Aorta (tissue), 5 donors: ENCODE measurements at regions of chr2 and their contacts with region 1.

Region 1: GRCh38 chr2:38115216-38116032 is 39.5 kb upstream of the CYP1B1 start:
- DNase-seq: peak; percentile 84 to 89
- ATAC-seq: peak; percentile 83
- H3K4me3 ChIP-seq: no peak overlapping the region
- H3K27ac ChIP-seq: no peak overlapping the region
- H3K4me1 ChIP-seq: no peaks in the 10 kb centered on the region
- H3K27me3 ChIP-seq: no peaks in the 10 kb centered on the region

Region 2: GRCh38 chr2:37982147-37982582 is 133.3 kb before region 1 on chr2:
- intact Hi-C with region 1: loop called in 1 of 2 experiments (anchors 10 kb)
- DNase-seq: peak; percentile 76 to 87
- ATAC-seq: peak; percentile 74
- H3K4me3 ChIP-seq: peak overlapping the region; percentile 11 to 41
- H3K27ac ChIP-seq: no peak overlapping the region
- H3K4me1 ChIP-seq: no peaks in the 10 kb centered on the region
- H3K27me3 ChIP-seq: no peaks in the 10 kb centered on the region

Region 3: DNA sequence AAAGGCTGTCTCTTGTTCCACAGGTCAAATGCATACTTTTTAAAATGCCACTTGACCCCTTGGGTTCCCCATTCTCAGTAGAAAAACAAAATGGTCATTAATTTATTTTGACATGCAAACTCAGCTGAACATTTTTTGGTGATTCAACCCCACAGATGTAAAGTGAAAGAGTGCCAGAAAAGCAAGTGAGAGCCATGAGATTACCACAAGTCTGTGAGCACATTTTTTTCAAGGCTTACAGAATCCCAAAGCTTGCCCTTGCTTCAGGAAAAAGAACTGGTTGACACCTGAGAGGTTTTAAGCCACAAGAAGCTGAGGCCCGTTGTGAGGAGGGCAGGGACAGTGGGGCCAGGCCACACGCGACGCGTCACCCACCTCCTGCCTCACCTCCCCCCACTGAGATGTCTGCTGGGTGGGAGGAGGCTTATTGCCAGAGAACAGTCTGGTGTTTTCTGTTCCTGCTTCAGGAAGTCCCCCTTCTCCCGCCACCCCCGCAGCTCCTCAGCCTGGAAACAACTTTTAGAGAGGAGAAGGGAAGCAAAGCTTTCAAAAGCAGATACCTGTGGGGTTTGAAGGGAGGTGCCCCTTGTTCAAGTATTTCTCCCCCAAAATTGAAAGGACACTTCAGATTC is 31.0 kb after region 1 on chr2:
- intact Hi-C with region 1: no loop called
- DNase-seq: peak; percentile 70 to 79
- ATAC-seq: peak; percentile 74
- H3K4me3 ChIP-seq: no peak overlapping the region
- H3K27ac ChIP-seq: peak overlapping the region; percentile 46 to 63
- H3K4me1 ChIP-seq: no peaks in the 10 kb centered on the region
- H3K27me3 ChIP-seq: no peaks in the 10 kb centered on the region

Region 4: GRCh38 chr2:38233231-38233983 is 118.0 kb after region 1 on chr2:
- intact Hi-C with region 1: loop called in 1 of 2 experiments (anchors 10 kb)
- DNase-seq: no peak
- ATAC-seq: peak; percentile 56
- H3K4me3 ChIP-seq: peak overlapping the region in 1 of 2 donors; percentile 34
- H3K27ac ChIP-seq: peak overlapping the region; percentile 21 to 81
- H3K4me1 ChIP-seq: no peaks in the 10 kb centered on the region
- H3K27me3 ChIP-seq: no peaks in the 10 kb centered on the region